ENCODE measurements at regions of chr6 and their contacts with region 1.

Region 1: DNA sequence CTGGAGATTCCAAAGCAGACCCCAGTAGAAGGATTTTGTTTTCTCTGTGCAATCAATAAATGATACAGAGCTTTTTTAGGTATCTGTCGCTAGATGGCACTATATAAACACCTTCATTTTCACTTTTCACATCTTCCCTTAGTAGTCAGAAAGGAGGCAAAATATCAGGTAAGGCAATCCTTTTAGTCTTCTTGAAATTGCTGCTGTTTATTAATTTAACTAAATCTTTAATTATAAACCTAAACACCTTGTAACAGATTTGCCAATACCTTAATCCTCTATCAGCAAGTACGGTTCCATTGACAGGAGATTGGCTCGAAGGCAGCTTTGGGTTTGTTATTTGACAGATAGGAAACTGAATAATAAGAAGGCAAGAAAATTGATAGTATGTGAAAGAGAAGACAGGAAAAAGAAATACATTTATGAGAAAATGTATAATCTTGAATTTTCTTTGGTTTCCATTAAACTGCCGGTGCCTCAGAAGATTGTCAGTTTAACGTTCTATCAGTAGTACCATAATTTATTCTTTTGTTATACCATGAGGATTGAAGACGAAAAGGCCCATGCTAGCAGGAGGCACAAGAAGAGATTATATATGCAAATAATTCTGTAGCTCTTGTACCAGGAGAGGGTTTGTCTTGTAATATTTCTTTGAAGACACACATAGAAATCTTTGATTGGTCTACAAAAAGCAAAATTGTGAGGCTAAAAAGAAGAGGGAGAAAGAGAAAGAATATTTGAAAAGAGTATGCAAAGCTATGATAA is 23.5 kb upstream of the IBTK start:
- DNase-seq: no peak
- ATAC-seq: peak; percentile 39
- H3K4me3 Mint-ChIP-seq: no peak overlapping the region
- H3K27ac Mint-ChIP-seq: no peak overlapping the region
- H3K4me1 Mint-ChIP-seq: peaks cover 2% of the 10 kb centered on the region
- H3K27me3 Mint-ChIP-seq: peaks cover 2% of the 10 kb centered on the region

Region 2: DNA sequence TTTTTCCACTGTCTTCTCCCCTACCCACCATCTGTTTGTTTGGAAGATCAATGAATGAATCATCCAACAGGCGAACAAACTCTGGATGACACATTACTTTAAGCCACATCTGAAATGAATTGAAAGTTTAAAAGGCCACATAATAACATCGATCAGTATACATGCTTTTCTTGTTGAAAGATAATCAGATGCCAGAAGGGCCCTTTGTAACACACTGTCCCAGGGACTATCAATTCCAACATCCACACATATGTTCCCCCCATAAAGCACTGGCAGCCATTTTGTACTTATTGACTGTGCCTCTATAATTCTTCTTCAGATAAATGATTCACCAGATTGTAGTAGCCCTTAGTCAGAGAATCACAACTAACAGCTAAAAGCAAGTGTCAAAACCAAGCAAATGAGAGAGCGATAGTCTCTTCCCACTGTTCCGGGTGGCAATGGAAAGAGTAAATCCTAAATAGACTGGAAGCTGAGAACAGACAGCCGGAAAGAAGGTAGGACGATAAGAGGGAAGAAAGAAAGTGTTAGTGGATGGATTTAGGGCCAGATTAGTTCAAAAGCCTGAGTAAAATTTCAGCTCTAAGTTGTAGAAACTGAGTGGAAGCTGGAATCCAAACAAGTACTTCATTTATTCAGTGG is 333.6 kb before region 1 on chr6:
- CTCF ChIA-PET with region 1: no interaction called
- DNase-seq: no peak
- ATAC-seq: no peak
- H3K4me3 Mint-ChIP-seq: no peak overlapping the region
- H3K27ac Mint-ChIP-seq: no peak overlapping the region
- H3K4me1 Mint-ChIP-seq: no peaks in the 10 kb centered on the region
- H3K27me3 Mint-ChIP-seq: no peaks in the 10 kb centered on the region

Region 3: DNA sequence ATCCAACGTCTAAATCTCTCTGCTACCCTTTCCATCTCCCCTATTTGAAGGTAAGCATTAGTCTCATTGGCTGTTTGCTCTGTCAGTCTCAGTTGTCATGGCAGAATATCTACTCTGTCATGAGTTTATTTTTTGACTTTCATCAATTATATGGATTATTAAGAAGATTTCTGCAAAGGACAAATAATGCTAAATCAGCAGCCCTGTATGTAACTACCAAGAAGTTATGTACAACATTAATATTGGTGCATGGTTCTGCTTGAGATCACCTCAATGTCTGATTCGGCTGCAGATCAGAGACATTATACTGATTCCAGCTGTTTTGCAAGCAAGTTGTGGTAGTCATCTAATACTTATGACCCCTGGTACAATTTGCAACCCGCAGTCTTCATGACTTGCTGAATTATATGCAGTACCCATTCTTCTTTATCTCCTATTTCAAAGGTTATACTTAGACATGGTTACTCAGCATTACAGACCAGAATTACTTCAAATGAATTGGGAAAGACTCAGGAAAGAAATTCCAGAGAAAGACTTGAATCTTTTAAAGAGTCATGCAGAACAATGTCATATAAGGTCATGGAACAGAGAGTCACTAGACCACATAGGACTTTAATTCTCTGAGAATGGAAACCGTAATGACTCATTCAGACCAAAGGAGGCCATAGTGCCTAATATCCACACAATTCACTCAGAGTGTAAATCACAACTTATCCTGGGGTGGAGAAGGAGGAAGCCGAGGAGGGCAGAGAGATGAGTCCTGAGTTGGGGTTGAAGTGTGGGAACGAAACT is 224.9 kb before region 1 on chr6:
- CTCF ChIA-PET with region 1: no interaction called
- DNase-seq: no peak
- ATAC-seq: no peak
- H3K4me3 Mint-ChIP-seq: no peak overlapping the region
- H3K27ac Mint-ChIP-seq: no peak overlapping the region
- H3K4me1 Mint-ChIP-seq: no peaks in the 10 kb centered on the region
- H3K27me3 Mint-ChIP-seq: no peaks in the 10 kb centered on the region

Region 4: GRCh38 chr6:82331031-82331773 is 60.1 kb after region 1 on chr6:
- CTCF ChIA-PET with region 1: no interaction called
- DNase-seq: no peak
- ATAC-seq: no peak
- H3K4me3 Mint-ChIP-seq: no peak overlapping the region
- H3K27ac Mint-ChIP-seq: no peak overlapping the region
- H3K4me1 Mint-ChIP-seq: no peaks in the 10 kb centered on the region
- H3K27me3 Mint-ChIP-seq: peaks cover 6% of the 10 kb centered on the region

Region 5: GRCh38 chr6:83057705-83058321 is 786.8 kb after region 1 on chr6:
- CTCF ChIA-PET with region 1: interaction called, 25 read pairs
- DNase-seq: peak; percentile 44
- ATAC-seq: peak; percentile 60
- H3K4me3 Mint-ChIP-seq: no peak overlapping the region
- H3K27ac Mint-ChIP-seq: no peak overlapping the region
- H3K4me1 Mint-ChIP-seq: peaks cover 4% of the 10 kb centered on the region
- H3K27me3 Mint-ChIP-seq: no peaks in the 10 kb centered on the region

Region 6: DNA sequence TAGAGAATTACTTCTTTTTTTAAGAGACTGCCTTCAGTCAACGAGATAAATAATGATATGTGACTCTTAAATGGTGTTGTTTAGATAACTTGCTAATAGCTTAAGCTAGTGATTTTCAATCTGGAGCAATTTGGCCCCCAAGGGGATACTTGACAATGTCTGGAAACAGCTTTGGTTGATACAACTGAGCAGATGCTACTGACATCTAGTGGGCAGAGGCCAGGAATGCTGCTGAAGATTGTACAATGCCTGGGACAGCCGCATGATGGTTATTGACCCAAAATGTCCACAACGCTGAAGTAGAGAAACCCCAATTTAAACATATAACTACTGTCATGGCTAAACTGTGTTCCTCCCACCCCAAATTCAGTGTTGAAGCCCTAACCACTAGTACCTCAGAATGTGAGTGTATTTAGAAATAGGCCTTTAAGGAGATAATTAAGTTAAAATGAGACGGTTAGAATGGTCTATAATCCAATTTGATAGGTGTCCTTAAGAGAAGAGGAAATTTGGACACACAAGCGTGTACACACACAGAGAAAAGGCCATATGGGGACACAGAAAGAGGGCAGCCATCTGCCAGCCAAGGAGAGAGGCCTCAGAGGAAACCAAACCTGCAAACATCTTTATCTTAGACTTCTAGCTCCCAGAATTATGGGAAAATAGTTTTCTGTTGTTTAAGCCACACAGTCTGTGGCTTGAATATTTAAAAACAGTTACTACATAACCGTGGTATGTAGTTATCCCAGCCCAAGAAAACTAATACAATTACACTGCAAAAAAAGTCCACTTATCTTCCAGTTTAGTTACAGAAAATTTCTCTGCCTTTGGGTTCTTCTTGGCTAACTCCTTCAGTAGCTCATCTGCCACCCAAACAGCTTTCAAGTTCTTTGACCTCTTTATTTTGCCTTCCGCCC is 944.3 kb after region 1 on chr6:
- CTCF ChIA-PET with region 1: interaction called, 10 read pairs
- DNase-seq: peak; percentile 78
- ATAC-seq: peak; percentile 99
- H3K4me3 Mint-ChIP-seq: no peak overlapping the region
- H3K27ac Mint-ChIP-seq: no peak overlapping the region
- H3K4me1 Mint-ChIP-seq: peaks cover 5% of the 10 kb centered on the region
- H3K27me3 Mint-ChIP-seq: peaks cover 29% of the 10 kb centered on the region